Motor neuron (in vitro differentiated cells): ENCODE measurements at regions of chr10 and their contacts with region 1.

Region 1: DNA sequence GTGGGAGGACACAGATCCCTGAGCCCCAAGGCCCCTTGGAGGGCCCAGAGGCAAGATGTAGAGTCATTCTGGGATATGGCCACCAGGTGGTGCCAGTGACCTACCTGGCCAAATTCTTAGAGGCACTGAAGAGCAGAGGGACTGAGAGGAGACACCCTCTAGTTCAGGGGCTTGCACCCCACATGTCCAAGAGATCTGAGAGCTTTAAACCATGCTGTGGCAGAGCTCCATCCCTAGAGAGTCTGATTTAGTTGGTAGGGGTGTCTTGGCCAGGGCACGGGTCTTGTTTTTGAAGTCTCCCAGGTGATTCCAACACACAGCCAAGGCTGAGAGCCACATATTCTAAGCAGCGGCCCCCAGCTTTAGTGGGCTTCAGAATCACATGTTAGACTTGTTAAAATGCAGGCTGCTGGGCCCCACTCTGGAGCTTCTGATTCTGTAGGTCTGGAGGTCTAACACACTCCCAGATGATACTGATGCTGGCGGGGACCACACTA is 52.5 kb downstream of the PRF1 start:
- ATAC-seq: peak; percentile 77 to 96 (median 86)
- H3K4me3 ChIP-seq: no peak overlapping the region
- H3K27ac ChIP-seq: no peak overlapping the region
- H3K4me1 ChIP-seq: peaks cover 0 to 7% of the 10 kb centered on the region in 2 donors

Region 2: GRCh38 chr10:70758757-70759514 is 208.9 kb after region 1 on chr10:
- in situ Hi-C with region 1: loop called in 5 of 9 experiments (anchors 10 to 25 kb)
- ATAC-seq: peak; percentile 22 to 80 (median 43)
- H3K4me3 ChIP-seq: no peak overlapping the region
- H3K27ac ChIP-seq: no peak overlapping the region
- H3K4me1 ChIP-seq: peaks cover 14 to 34% of the 10 kb centered on the region in 2 donors

Region 3: GRCh38 chr10:70849582-70850016 is 299.6 kb after region 1 on chr10:
- in situ Hi-C with region 1: loop called in 1 of 9 experiments (anchors 25 kb)
- ATAC-seq: peak in 3 of 8 experiments; percentile 19 to 71 (median 51)
- H3K4me3 ChIP-seq: no peak overlapping the region
- H3K27ac ChIP-seq: no peak overlapping the region
- H3K4me1 ChIP-seq: peaks cover 2% of the 10 kb centered on the region in 2 donors

Region 4: DNA sequence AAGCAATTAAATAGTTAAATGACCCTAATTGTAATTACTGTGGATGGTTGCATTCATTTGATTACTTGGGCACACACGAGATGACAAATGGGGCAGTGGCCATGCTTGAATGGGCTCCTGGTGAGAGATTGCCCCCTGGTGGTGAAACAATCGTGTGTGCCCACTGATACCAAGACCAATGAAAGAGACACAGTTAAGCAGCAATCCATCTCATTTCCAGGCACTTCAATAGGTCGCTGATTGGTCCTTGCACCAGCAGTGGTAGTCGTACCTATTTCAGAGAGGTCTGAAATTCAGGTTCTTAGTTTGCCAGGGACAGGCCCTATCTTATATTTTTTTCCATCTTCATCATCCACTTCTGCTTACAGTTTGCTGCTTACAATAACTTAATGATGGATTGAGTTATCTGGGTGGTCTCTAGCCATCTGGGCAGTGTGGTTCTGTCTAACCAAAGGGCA is 330.1 kb after region 1 on chr10:
- in situ Hi-C with region 1: loop called in 1 of 9 experiments (anchors 25 kb)
- ATAC-seq: peak; percentile 67 to 95 (median 84)
- H3K4me3 ChIP-seq: no peak overlapping the region
- H3K27ac ChIP-seq: no peak overlapping the region
- H3K4me1 ChIP-seq: no peaks in the 10 kb centered on the region